Activated CD4-positive, alpha-beta memory T cell treated with anti-CD3 and anti-CD28 coated beads for 36 hours (primary cell): ENCODE measurements at regions of chr20 and their contacts with region 1.

Region 1: GRCh38 chr20:1466211-1467081 is at the start of gene NSFL1C:
- DNase-seq: peak; percentile 98
- H3K4me3 Mint-ChIP-seq: peak within 1 kb of the TSS; percentile 82
- H3K27ac Mint-ChIP-seq: peak within 1 kb of the TSS; percentile 77
- H3K4me1 Mint-ChIP-seq: peaks cover 38% of the 10 kb centered on the region
- H3K27me3 Mint-ChIP-seq: peaks cover 6% of the 10 kb centered on the region
- total RNA-seq, gene NSFL1C: 81.8 to 83.1 TPM

Region 2: DNA sequence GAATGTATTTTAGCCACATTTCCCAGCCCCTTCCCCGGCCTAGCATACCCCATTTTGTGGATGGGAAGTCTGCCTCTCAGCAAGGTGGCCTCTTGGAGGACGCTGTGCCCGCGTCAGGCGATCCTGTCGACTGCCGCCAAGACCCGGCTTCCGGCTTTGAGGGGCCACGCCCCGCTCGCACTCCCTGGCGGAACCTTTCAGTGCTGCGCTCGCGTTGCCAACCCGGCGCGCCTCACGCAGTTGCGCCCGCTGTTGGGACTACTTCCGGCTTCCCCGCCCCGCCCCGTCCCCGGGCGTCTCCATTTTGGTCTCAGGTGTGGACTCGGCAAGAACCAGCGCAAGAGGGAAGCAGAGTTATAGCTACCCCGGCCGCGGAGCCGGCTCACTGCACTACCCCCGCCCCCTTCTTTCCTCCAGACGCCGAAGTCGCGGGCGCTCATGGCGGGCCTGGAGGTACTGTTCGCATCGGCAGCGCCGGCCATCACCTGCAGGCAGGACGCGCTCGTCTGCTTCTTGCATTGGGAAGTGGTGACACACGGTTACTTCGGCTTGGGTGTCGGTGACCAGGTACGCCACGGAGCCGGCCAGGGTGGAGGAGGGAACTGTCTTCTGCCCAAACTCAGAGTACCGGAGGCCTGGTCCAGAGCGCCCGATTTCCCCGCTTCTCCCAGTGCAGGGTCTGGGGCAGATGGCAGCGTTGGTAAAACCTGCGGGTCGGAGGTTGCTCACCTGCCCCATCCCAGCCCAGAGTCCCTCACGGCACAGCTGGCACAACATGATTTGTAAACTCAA is 347.9 kb before region 1 on chr20 and contains the start of gene PSMF1:
- CTCF ChIA-PET with region 1: no interaction called
- POLR2A ChIA-PET with region 1: no interaction called
- intact Hi-C with region 1: loop called (anchors 1 kb)
- DNase-seq: peak; percentile 97
- H3K4me3 Mint-ChIP-seq: peak within 1 kb of the TSS; percentile 89
- H3K27ac Mint-ChIP-seq: peak within 1 kb of the TSS; percentile 84
- H3K4me1 Mint-ChIP-seq: peaks cover 57% of the 10 kb centered on the region
- H3K27me3 Mint-ChIP-seq: no peaks in the 10 kb centered on the region
- total RNA-seq, gene PSMF1: 140 to 149 TPM

Region 3: DNA sequence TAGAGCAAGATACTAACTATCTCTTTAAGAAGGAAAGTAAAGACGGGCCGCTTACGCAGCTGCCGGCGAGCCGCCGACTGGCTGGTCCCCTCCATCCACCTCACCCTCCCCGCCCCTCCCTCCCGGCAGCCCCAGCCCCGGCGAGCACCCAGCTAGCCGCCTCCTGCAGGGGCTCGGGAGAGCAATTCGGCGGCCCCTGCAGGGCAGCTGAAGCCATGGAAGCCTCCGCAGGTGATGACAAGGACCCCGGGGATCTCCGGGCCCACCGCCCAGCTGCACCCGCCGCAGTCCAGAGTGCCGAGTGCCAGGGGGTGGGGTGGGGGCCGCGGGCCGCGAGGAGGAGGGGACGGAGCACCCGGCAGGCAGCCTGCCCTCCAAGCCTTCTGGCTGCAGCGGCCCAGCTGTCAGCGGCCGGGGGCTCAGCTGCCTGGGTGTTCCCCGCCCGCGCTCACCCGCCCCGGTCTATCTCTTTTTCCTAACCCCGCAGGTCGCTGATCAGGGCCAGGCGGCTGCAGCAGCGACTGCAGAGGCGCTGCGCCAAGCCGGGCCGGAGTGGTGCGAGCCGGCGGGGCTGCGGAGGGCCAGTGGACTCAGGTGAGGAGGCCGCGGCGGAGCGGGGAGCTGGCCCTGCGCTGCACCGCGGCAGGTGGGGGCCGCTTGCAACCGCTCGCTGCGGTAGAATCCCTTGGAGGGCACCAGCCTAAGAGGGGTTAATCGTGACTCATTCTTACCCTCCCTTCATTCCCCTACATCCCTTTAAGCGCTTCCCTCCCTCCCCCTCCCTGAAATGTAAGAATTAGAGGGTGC is 200.1 kb before region 1 on chr20 and contains the start of gene SNPH:
- CTCF ChIA-PET with region 1: interaction called, 10 read pairs
- POLR2A ChIA-PET with region 1: no interaction called
- intact Hi-C with region 1: no loop called
- DNase-seq: peak; percentile 86
- H3K4me3 Mint-ChIP-seq: peak within 1 kb of the TSS; percentile 89
- H3K27ac Mint-ChIP-seq: peak within 1 kb of the TSS; percentile 85
- H3K4me1 Mint-ChIP-seq: peaks cover 42% of the 10 kb centered on the region
- H3K27me3 Mint-ChIP-seq: no peaks in the 10 kb centered on the region
- total RNA-seq, gene SNPH: 3.4 to 4.3 TPM

Region 4: DNA sequence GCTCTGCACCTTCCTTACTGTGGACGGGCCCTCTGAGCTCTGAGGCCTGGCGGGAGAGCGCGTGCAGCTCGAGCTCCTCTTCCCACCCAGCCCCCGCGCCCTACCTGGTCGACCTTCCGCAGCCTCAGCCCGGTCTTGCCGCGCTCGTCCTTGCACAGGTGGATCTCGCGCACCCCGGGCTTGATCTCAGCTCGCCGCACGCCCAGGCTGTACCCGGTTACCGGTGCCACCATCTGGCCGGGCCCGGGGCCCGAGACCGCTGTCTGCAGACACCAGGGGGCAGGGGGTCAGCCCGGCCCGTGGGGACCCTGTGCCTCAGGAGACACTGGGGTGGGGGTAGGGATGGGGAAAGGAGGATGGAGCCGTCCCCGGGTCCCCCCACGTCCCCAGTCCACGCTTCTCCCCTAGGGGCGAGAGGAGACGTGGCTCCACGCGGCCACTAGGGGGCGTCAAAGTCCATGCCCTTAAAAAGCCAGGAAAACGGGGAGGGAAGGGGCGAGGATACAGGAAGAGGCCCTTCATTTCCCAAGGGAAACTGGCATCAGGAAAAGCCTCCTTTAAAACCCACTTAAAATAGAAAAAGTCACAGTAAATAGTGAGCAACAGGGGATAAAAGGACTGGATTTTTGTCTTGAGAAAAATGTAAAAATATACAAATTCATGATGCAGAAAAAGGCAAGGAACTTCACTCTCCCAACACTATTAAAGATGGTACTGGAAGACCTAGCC is 153.0 kb before region 1 on chr20:
- CTCF ChIA-PET with region 1: interaction called, 14 read pairs
- POLR2A ChIA-PET with region 1: no interaction called
- intact Hi-C with region 1: no loop called
- DNase-seq: peak; percentile 70
- H3K4me3 Mint-ChIP-seq: no peak overlapping the region
- H3K27ac Mint-ChIP-seq: no peak overlapping the region
- H3K4me1 Mint-ChIP-seq: peaks cover 13% of the 10 kb centered on the region
- H3K27me3 Mint-ChIP-seq: no peaks in the 10 kb centered on the region

Region 5: DNA sequence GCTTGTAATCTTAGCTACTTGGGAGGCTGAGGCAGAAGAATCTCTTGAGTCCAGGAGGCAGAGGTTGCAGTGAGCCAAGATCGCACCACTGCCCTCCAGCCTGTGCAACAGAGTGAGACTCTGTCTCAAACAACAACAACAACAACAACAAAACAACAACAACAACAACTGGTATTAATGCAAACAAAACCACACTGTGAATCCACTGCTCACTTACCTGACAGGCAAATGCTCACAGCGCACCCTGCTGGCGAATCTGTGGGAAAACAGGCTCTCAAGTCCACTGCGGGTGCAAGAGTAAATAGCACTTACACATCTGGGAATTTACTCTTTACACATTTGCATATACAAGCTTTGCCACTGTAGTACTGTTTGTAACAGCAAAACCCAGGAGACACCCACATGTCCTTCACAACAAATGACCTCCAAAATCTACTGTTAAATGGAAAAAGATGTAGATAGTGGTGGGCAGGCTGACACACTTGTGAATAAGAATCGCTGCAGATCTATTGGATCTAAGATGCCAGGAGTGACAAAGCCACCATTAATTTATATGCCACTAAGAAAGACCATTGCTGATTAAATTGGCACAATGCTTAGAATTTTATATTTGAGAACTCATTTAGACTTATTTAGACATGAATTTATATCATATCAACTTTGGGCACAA is 29.1 kb before region 1 on chr20:
- CTCF ChIA-PET with region 1: interaction called, 15 read pairs
- POLR2A ChIA-PET with region 1: no interaction called
- intact Hi-C with region 1: loop called (anchors 2 kb)
- DNase-seq: peak; percentile 87
- H3K4me3 Mint-ChIP-seq: peak overlapping the region; percentile 20
- H3K27ac Mint-ChIP-seq: no peak overlapping the region
- H3K4me1 Mint-ChIP-seq: peaks cover 27% of the 10 kb centered on the region
- H3K27me3 Mint-ChIP-seq: no peaks in the 10 kb centered on the region

Region 6: GRCh38 chr20:1503564-1504227 is 37.2 kb after region 1 on chr20:
- CTCF ChIA-PET with region 1: interaction called, 25 read pairs
- POLR2A ChIA-PET with region 1: no interaction called
- intact Hi-C with region 1: loop called (anchors 1 kb)
- DNase-seq: peak; percentile 83
- H3K4me3 Mint-ChIP-seq: no peak overlapping the region
- H3K27ac Mint-ChIP-seq: no peak overlapping the region
- H3K4me1 Mint-ChIP-seq: peaks cover 3% of the 10 kb centered on the region
- H3K27me3 Mint-ChIP-seq: peaks cover 17% of the 10 kb centered on the region

Region 7: DNA sequence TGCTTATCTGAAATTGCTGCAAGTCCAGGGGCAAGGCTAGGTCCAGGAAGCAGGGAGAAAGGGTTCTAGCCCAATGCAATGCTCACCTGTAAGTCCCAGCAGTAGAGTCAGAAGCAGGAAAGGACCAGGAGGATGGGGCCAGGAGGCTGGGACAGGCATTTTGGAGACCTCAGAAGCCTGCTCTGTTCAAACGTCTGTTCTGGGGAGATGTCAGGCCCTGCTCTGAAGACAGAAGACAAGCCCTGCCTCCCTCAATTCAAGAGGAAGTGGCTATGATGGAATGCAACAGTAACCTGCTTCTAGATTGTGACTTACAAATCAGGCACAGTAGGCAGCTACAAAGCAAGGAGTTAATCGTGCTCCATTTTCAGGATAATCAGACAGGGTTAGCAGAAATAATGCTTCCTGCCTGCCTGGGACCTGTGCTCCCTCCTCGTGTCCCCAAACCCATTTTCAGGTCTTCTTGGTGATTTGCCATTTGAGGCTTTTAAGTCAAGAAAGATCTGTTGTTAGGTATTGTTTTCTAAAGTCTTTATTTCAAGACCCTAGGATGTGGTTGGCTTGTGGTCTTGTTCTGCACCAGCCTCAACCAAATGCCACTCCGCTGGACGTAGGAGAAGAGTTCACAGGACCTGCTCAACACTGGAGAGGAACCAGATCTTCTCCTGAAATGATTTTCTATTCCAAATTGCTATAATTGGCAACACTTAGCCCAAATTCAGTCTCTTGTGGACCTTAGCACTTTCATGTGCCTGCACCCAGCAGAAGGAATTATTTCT is 191.3 kb after region 1 on chr20 and contains the start of gene SIRPG:
- CTCF ChIA-PET with region 1: interaction called, 3 read pairs
- POLR2A ChIA-PET with region 1: no interaction called
- intact Hi-C with region 1: loop called (anchors 5 kb)
- DNase-seq: peak; percentile 63
- H3K4me3 Mint-ChIP-seq: peak within 1 kb of the TSS; percentile 84
- H3K27ac Mint-ChIP-seq: peak within 1 kb of the TSS; percentile 99
- H3K4me1 Mint-ChIP-seq: peaks cover 86% of the 10 kb centered on the region
- H3K27me3 Mint-ChIP-seq: no peaks in the 10 kb centered on the region
- total RNA-seq, gene SIRPG: 27.9 to 28.5 TPM